Cardiac septum (tissue), 1 donor: ENCODE measurements at regions of chr14 and their contacts with region 1.

Region 1: DNA sequence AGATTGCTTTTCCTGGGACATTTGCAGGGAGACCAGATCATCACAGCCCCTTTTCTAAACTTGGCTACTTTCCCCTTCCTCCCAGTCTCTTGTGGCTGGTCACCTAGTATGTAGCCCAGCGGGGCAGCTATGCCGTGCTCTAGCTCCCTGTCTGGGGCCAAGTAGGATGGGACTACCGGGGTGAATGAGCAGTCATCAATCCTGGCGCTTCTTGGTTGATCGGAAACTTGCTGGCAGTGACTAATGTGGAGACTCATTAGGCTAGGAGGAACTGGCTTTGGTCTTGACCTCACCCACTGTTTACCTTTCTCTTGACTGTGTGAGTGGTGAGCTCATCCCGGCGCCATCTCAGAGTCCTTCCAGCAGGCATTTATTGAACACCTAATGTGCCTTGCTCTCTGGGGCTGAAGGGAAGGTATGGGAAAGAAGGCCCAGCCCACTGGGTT is 15.9 kb downstream of the PLEKHG3 start:
- DNase-seq: peak; percentile 61

Region 2: DNA sequence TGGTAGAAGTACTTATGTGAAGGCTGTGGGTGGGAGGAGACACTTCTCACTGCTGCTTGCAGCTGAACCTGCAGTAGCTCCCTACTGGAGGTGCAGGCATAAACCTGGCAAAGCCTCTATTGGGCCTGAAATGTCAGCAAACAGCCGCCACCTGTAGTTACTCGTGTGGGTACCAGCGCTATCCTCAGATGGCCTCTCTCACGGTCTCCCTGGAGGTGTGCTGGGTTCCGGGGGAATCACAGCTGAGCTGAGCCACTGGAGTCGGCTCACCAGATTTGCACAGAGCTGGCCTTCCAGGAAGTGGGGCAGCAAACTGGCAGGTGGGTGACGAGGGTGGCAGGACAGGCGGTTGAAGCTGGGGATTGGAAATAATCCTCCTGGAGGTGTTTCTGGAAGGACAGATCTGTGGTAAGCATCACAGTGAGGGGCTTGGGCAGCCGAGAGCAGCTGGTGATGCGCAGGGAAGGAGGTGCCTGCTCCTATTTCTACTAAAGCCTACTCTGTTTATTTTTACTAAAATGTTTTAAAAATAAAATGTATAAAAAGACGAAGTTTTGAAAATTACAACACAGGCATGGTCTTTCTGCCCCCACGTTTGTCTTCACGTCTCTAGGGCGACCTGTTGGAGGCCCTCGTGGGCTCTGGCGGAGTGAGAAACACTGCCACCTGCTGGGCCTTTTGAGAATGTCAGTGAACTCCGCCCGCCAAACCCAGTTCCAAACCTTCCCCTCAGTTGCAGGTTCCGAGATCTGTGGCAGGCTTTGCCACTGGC is 83.8 kb before region 1 on chr14:
- intact Hi-C with region 1: no loop called
- DNase-seq: peak; percentile 82

Region 3: GRCh38 chr14:64656986-64657385 is 63.2 kb before region 1 on chr14:
- intact Hi-C with region 1: no loop called
- DNase-seq: no peak

Region 4: GRCh38 chr14:64681796-64682710 is 38.1 kb before region 1 on chr14:
- intact Hi-C with region 1: loop called (anchors 5 kb)
- DNase-seq: peak; percentile 80

Region 5: DNA sequence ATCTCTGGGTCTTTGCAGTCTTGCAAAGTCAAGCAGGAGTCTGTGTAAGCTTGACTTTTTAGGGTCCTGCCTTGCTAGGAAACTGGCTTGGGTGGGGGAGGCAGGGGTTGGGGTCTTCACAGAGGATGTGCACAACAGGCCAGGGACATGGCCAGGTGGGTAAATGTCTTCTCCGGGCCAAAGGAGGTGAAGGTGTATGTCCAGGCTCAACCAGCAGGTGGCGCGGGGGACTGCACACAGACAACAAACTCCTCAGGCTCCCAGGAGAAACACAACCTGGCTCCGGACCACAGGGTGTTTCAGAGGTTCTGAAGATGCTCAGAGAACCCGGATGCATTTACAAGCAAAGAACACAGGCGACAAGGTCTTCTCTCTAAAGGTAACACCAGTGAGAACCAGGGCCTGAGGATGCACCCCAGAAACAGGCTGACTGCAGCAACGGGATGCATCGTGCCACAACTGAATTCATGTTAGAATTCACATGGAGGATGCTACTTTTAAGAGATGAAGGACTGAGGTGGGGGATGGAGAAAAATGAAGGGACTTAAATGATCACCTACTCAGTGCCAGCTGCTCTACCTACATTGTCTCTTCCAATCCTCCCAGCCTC is 40.1 kb after region 1 on chr14:
- intact Hi-C with region 1: no loop called
- DNase-seq: peak; percentile 86